CD4-positive, alpha-beta memory T cell (primary cell): ENCODE measurements at regions of chr1 and their contacts with region 1.

Region 1: GRCh38 chr1:19462781-19463503 is 22.4 kb downstream of the CAPZB start:
- DNase-seq: peak; percentile 78 to 88 (median 83)
- H3K4me3 ChIP-seq: peak overlapping the region; percentile 5 to 46
- H3K4me3 Mint-ChIP-seq: peak overlapping the region; percentile 81 to 93 (median 86)
- H3K27ac ChIP-seq: peak overlapping the region; percentile 71
- H3K27ac Mint-ChIP-seq: peak overlapping the region; percentile 90 to 96 (median 95)
- H3K4me1 ChIP-seq: peaks cover 99% of the 10 kb centered on the region
- H3K4me1 Mint-ChIP-seq: peaks cover 73 to 94% (median 82%) of the 10 kb centered on the region in 4 donors
- H3K27me3 ChIP-seq: no peaks in the 10 kb centered on the region
- H3K27me3 Mint-ChIP-seq: no peaks in the 10 kb centered on the region

Region 2: DNA sequence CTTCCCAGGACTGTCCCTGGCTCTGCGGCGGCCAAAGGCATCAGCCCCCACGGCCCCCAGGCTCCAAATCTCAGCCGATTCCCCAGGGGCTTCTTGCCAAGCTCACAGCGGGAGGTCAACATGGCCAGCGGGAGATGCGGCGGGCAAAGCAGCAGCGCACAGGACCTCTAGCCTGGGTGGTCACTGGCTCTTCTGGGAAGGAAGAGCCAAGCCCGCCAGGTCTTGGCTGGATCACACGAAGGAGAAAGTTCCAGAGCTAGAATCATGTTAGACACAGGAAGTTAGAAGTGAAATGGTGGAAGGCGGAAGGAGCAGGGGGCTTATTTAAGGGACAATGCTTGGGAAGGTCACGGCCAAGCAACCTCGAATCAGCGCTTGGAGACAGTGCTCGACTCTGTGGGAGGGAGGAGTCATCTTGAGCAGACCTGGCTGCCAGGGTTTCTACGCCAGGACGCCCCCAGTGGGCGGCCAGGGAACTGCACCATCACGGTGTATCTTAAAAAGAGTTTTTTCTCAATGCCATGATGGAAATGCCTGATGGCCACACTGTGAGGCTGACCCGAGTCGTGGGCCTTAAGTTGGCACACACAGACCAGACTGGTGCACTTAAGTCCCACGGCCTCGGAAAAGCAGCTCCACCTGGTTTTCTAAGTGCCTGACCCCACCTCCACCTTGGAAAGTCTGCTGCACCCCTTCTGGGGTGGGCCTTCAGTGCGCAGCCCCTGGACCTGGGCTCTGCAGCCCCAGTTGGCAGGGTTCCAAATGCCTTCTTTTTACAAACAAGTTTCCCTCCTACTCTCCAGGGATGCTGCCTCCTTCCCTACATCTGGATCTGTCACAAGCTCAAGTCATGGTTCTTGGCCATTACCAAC is 121.5 kb before region 1 on chr1:
- CTCF ChIA-PET with region 1: no interaction called
- POLR2A ChIA-PET with region 1: no interaction called
- intact Hi-C with region 1: no loop called
- DNase-seq: peak; percentile 64 to 71 (median 66)
- H3K4me3 ChIP-seq: no peak overlapping the region
- H3K4me3 Mint-ChIP-seq: peak overlapping the region in 1 of 8 donors; percentile 39
- H3K27ac ChIP-seq: no peak overlapping the region
- H3K27ac Mint-ChIP-seq: peak overlapping the region in 6 of 7 donors; percentile 62 to 95 (median 83)
- H3K4me1 ChIP-seq: no peaks in the 10 kb centered on the region
- H3K4me1 Mint-ChIP-seq: peaks cover 6 to 11% (median 7%) of the 10 kb centered on the region in 4 donors
- H3K27me3 ChIP-seq: no peaks in the 10 kb centered on the region
- H3K27me3 Mint-ChIP-seq: no peaks in the 10 kb centered on the region

Region 3: DNA sequence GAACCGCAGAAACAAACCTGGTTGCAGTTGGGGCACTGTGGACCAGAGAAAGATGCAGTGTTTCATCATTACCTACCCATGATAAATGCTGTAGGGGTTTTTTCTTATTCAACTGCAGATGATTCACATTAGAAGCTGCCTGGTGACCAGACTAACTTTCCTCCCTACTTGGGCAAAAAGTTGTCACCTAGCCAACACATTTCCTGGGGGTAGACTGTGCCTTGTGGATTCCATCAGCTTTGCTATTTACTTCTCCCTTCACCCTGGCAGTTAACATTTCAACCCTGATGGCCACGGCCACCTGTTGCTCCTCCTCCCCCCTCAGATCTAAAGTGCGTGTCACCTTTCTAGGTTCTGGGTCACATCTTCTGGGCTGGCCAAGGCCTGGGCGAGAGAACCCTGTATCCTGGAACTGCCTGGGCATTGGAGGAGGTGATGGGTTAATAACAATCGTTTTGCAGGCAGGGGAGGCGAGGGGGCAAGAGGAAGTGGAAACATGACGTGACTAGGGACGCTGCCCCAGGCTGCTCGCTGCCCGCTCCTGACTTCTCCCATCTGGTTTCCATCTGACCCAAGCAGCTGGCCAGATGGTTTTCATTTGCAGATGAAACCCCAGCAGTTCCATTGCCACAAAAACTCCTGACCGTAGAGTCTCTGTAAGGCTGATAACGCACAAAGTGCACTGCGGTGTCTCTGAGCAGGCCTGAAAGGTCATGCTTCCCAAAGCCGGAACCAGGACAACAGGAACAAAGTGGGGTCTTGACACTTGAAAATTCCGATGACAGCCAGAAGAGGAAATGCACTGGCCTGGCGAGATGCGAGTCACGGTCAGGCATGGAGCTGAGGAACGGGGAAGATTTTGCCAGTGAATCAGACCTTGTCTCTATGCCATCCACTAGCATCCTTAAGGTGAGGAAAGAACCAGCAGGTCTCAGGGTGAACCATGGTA is 14.2 kb before region 1 on chr1:
- CTCF ChIA-PET with region 1: interaction called, 8 read pairs
- POLR2A ChIA-PET with region 1: interaction called, 734 read pairs
- intact Hi-C with region 1: loop called (anchors 2 kb)
- DNase-seq: no peak
- H3K4me3 ChIP-seq: no peak overlapping the region
- H3K4me3 Mint-ChIP-seq: peak overlapping the region in 5 of 8 donors; percentile 12 to 68 (median 46)
- H3K27ac ChIP-seq: no peak overlapping the region
- H3K27ac Mint-ChIP-seq: peak overlapping the region; percentile 58 to 85 (median 78)
- H3K4me1 ChIP-seq: peaks cover 92% of the 10 kb centered on the region
- H3K4me1 Mint-ChIP-seq: peaks cover 63 to 96% (median 79%) of the 10 kb centered on the region in 4 donors
- H3K27me3 ChIP-seq: no peaks in the 10 kb centered on the region
- H3K27me3 Mint-ChIP-seq: no peaks in the 10 kb centered on the region

Region 4: GRCh38 chr1:19477284-19478249 is 14.6 kb after region 1 on chr1:
- CTCF ChIA-PET with region 1: interaction called, 11 read pairs
- POLR2A ChIA-PET with region 1: interaction called, 734 read pairs
- intact Hi-C with region 1: loop called (anchors 2 kb)
- DNase-seq: peak in 4 of 5 donors; percentile 26 to 59 (median 41)
- H3K4me3 ChIP-seq: peak overlapping the region; percentile 16 to 26
- H3K4me3 Mint-ChIP-seq: peak overlapping the region; percentile 80 to 95 (median 88)
- H3K27ac ChIP-seq: peak overlapping the region; percentile 80
- H3K27ac Mint-ChIP-seq: peak overlapping the region; percentile 92 to 99 (median 95)
- H3K4me1 ChIP-seq: peaks cover 99% of the 10 kb centered on the region
- H3K4me1 Mint-ChIP-seq: peaks cover 71 to 98% (median 87%) of the 10 kb centered on the region in 4 donors
- H3K27me3 ChIP-seq: no peaks in the 10 kb centered on the region
- H3K27me3 Mint-ChIP-seq: no peaks in the 10 kb centered on the region

Region 5: DNA sequence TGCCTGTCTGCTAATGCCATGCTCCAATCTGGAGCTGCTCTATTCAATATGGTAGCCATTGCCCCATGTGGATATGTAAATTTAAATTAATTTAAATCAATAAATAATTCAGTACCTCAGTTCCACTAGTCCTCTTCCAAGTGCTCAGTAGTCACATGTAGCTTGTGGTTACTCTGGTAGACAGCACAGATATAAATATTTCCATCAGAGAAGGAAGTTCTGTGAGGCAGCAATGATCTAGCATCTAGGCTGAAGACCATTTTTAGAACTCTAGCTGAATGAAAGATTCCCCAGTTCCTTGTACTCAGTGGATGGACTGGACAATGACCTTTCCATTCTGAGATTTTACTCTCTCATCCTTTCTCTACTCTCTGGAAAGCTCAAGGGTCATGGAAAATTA is 48.2 kb after region 1 on chr1:
- CTCF ChIA-PET with region 1: no interaction called
- POLR2A ChIA-PET with region 1: no interaction called
- intact Hi-C with region 1: no loop called
- DNase-seq: no peak
- H3K4me3 ChIP-seq: no peak overlapping the region
- H3K4me3 Mint-ChIP-seq: no peak overlapping the region
- H3K27ac ChIP-seq: no peak overlapping the region
- H3K27ac Mint-ChIP-seq: no peak overlapping the region
- H3K4me1 ChIP-seq: peaks cover 9% of the 10 kb centered on the region
- H3K4me1 Mint-ChIP-seq: peaks cover 5 to 15% (median 6%) of the 10 kb centered on the region in 4 donors
- H3K27me3 ChIP-seq: no peaks in the 10 kb centered on the region
- H3K27me3 Mint-ChIP-seq: peaks cover 0 to 2% of the 10 kb centered on the region in 2 donors